Activated T-helper 2 cell treated with anti-CD3 and anti-CD28 coated beads, Interferon-gamma antibody, Interleukin-2, Interleukin-4, amounts not matched to agents 10 μg/mL and 5 μg/mL and 100 μg/mL, durations not matched to agents 14 hours and 24 hours and 36 hours (primary cell): ENCODE measurements at regions of chr16 and their contacts with region 1.

Region 1: DNA sequence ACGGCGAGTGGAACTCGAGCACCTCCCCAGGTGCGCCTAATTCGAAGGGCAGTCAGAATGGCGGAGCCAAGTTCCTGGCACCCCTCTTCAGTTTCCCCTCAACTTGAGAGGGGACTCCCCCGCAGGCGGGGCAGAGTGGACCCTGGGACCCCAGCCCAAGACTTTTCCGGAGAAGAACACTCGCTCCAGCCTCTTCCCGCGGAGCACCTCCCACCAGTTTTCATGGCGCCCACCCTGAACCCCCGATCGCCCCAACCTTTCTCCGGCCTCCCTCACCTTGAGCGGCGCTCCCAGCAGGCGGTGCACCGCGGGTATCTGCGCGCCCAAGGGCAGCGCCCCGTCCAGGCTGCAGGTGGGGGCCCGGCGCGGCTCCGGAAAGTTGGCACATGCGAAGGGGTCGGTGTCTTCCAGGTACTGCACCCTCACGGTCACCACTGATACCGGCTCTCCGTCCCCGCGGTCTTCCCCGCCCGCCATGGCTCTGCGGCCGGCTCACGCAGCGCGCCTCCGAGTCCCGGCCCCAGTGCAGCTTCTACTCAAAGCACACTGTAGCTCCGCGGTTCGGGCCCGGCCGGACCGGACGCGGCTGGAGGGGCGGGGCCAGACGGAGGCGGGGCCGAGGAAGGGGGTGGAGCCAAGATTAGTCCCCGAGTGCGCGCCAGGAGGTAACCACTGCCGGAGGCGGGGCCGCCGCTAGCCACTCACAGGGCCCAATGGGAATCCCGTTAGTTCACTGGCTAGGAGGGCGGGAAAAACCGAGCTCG is at the start of gene FHOD1:
- DNase-seq: peak; percentile 98
- H3K4me3 Mint-ChIP-seq: peak within 1 kb of the TSS; percentile 82
- H3K27ac Mint-ChIP-seq: peak within 1 kb of the TSS; percentile 77
- H3K4me1 Mint-ChIP-seq: peaks cover 46% of the 10 kb centered on the region
- H3K27me3 Mint-ChIP-seq: peaks cover 12% of the 10 kb centered on the region
- total RNA-seq, gene FHOD1: 134 and 141 TPM in 2 replicates

Region 2: DNA sequence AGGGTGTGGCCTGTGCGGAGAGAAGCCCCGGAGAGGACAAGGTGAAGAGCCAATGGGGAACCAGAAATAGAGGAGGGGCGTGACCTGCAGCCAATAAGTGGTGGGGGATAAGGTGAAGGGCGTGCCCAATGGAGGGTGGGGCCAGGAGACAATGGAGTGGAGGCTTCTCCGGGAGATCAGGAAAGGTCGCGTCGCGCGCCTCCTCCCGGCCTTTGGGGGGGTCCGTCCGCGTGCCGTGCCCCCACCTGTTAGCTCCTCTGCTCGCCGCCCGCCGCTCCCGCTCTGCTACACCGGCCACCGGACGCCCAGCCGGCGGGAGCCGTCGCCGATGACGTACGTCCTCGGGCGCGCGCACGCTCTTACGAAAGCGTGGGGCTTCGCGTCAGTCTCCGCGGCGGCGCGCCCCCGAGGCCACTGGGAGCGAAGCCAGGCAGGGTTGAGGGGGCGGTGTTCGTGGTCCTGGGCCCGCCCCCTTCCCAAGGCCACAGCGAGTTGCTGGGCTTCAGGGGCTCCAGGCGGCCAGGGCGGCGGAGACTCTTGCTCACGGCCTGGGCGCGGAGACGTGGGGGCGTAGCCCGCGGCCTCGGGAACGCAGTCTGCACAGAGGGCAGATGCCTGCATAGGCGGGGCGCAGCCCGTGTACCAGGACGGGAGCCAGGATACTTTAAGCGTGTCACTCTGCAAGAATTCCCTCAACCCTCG is 63.3 kb before region 1 on chr16 and contains the start of gene MATCAP1:
- intact Hi-C with region 1: loop called (anchors 5 kb)
- DNase-seq: peak; percentile 95
- H3K4me3 Mint-ChIP-seq: peak within 1 kb of the TSS; percentile 70
- H3K27ac Mint-ChIP-seq: no peak within 1 kb of the TSS
- H3K4me1 Mint-ChIP-seq: peaks cover 12% of the 10 kb centered on the region
- H3K27me3 Mint-ChIP-seq: peaks cover 7% of the 10 kb centered on the region
- total RNA-seq, gene MATCAP1: 57.1 and 59.5 TPM in 2 replicates

Region 3: DNA sequence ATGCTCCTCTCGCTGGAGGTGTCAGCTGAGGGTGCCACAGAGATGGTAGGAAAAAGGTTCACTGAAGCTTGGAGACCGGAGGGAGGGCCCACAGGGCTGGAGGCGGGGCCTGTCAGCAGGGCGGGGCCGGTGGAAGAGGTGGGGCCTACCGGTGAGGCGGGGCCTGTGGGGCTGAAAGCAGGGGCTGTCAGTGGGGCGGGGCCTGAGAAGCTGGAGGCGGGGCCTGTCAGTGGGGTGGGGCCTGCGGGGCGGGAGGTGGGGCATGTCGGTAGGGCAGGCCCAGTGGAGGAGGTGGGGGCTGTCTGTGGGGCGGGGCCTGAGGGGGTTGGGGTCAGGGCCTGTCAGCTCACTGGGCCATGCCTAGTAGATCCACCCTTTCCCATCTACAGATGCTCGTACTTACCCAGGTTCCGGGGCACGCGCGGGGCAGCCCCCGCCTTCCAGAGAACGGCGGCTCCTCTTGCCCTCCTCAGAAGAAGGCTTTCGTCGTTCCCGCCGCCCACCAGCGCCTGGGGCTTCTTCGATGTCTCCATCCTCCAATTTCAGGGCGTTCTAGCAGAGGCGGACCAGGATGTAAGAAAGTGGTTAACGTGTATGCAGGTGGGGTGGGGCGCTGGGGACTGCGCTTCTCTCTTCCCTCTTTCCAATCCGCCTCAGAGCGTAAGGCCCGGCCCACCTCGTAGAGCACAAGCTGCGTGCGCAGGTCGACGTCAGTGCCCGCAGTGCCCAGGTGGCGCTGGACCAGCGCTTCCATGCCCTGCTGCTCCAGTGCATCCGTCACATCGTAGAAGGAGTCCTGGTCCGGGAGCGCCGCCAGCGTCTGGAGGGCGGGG is 10.3 kb before region 1 on chr16:
- intact Hi-C with region 1: loop called (anchors 1 kb)
- DNase-seq: peak; percentile 71
- H3K4me3 Mint-ChIP-seq: peak overlapping the region; percentile 17
- H3K27ac Mint-ChIP-seq: peak overlapping the region; percentile 82
- H3K4me1 Mint-ChIP-seq: peaks cover 13% of the 10 kb centered on the region
- H3K27me3 Mint-ChIP-seq: no peaks in the 10 kb centered on the region

Region 4: DNA sequence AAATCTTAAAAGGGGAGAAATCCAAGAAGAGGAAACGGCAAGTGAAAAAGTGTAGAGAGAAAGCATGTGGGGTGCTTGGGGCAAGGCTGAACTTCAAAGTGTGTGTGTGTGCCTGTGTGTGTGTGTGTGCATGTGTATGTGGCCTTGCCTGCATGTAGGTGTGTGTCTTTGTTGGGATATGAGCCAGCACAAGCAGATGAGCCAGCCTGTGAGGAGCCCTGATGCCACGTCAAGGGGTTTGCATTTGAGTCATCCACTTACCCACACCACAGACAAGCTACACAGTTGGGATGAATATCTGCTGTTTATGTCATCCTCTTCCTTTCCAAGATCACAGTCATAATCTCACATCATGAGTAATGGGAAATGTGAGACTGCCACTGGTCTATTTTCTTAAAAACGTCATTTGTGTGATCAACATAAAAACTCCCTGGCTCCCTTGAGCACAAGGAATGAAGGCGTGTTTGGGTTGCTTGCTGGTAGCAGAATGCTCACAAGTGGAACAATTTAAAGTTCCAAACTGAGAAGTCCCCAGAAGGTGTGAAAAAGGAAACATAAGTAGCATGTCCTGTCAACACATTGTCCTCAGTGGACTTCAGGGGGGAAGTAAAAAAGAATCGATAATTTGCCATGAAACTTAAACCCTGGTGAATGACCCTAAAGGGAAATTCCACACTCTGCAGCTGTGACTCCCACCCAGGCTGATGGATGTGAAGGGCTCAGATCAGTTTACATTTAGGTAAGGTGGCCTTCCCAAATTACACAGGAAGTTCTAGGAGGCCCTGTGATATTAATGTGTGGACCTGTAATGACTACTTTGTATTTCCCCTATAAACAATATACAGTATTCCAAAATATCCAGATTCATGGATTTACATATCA is 64.7 kb after region 1 on chr16:
- intact Hi-C with region 1: loop called (anchors 2 kb)
- DNase-seq: peak; percentile 76
- H3K4me3 Mint-ChIP-seq: no peak overlapping the region
- H3K27ac Mint-ChIP-seq: peak overlapping the region; percentile 98
- H3K4me1 Mint-ChIP-seq: peaks cover 45% of the 10 kb centered on the region
- H3K27me3 Mint-ChIP-seq: no peaks in the 10 kb centered on the region

Region 5: GRCh38 chr16:67336648-67337047 is 89.5 kb after region 1 on chr16:
- intact Hi-C with region 1: no loop called
- DNase-seq: no peak
- H3K4me3 Mint-ChIP-seq: no peak overlapping the region
- H3K27ac Mint-ChIP-seq: no peak overlapping the region
- H3K4me1 Mint-ChIP-seq: no peaks in the 10 kb centered on the region
- H3K27me3 Mint-ChIP-seq: peaks cover 2% of the 10 kb centered on the region

Region 6: GRCh38 chr16:67660564-67661028 is 413.5 kb after region 1 on chr16 and contains the start of gene PARD6A:
- intact Hi-C with region 1: loop called (anchors 2 kb)
- DNase-seq: peak; percentile 95
- H3K4me3 Mint-ChIP-seq: peak within 1 kb of the TSS; percentile 92
- H3K27ac Mint-ChIP-seq: peak within 1 kb of the TSS; percentile 96
- H3K4me1 Mint-ChIP-seq: peaks cover 15% of the 10 kb centered on the region
- H3K27me3 Mint-ChIP-seq: no peaks in the 10 kb centered on the region
- total RNA-seq, gene PARD6A: 10.7 and 11.5 TPM in 2 replicates